CD4-positive, alpha-beta T cell (primary cell): ENCODE measurements at regions of chr19 and their contacts with region 1.

Region 1: GRCh38 chr19:56594783-56595547 is at the start of gene ZNF71:
- DNase-seq: peak; percentile 79 to 90 (median 84)
- ATAC-seq: peak; percentile 95
- H3K4me3 ChIP-seq: peak within 1 kb of the TSS; percentile 73
- H3K4me3 Mint-ChIP-seq: peak within 1 kb of the TSS; percentile 92
- H3K27ac ChIP-seq: peak within 1 kb of the TSS; percentile 43 to 62
- H3K27ac Mint-ChIP-seq: peak within 1 kb of the TSS; percentile 79
- H3K4me1 ChIP-seq: peaks cover 19% of the 10 kb centered on the region
- H3K4me1 Mint-ChIP-seq: peaks cover 24% of the 10 kb centered on the region
- H3K27me3 ChIP-seq: no peaks in the 10 kb centered on the region
- H3K27me3 Mint-ChIP-seq: no peaks in the 10 kb centered on the region
- CTCF ChIP-seq: no peak
- total RNA-seq, gene ZNF71: 2.2 TPM

Region 2: GRCh38 chr19:56403764-56404704 is 190.9 kb before region 1 on chr19 and contains the start of gene ZNF583:
- CTCF ChIA-PET with region 1: no interaction called
- POLR2A ChIA-PET with region 1: interaction called, 4 read pairs
- intact Hi-C with region 1: loop called in 1 of 2 experiments (anchors 5 kb)
- DNase-seq: peak; percentile 79 to 95 (median 88)
- ATAC-seq: peak; percentile 84
- H3K4me3 ChIP-seq: peak within 1 kb of the TSS; percentile 82
- H3K4me3 Mint-ChIP-seq: peak within 1 kb of the TSS; percentile 99
- H3K27ac ChIP-seq: peak within 1 kb of the TSS; percentile 88 to 96
- H3K27ac Mint-ChIP-seq: peak within 1 kb of the TSS; percentile 95
- H3K4me1 ChIP-seq: peaks cover 22% of the 10 kb centered on the region
- H3K4me1 Mint-ChIP-seq: peaks cover 32% of the 10 kb centered on the region
- H3K27me3 ChIP-seq: no peaks in the 10 kb centered on the region
- H3K27me3 Mint-ChIP-seq: no peaks in the 10 kb centered on the region
- CTCF ChIP-seq: no peak
- total RNA-seq, gene ZNF583: 0.95 to 1.5 TPM

Region 3: GRCh38 chr19:56567274-56568120 is 27.5 kb before region 1 on chr19 and contains the start of gene ZNF470:
- CTCF ChIA-PET with region 1: no interaction called
- POLR2A ChIA-PET with region 1: no interaction called
- intact Hi-C with region 1: loop called in 1 of 2 experiments (anchors 1 kb)
- DNase-seq: peak; percentile 75 to 91 (median 84)
- ATAC-seq: peak; percentile 96
- H3K4me3 ChIP-seq: peak within 1 kb of the TSS; percentile 67
- H3K4me3 Mint-ChIP-seq: peak within 1 kb of the TSS; percentile 99
- H3K27ac ChIP-seq: peak within 1 kb of the TSS; percentile 15 to 61
- H3K27ac Mint-ChIP-seq: peak within 1 kb of the TSS; percentile 81
- H3K4me1 ChIP-seq: peaks cover 20% of the 10 kb centered on the region
- H3K4me1 Mint-ChIP-seq: peaks cover 27% of the 10 kb centered on the region
- H3K27me3 ChIP-seq: no peaks in the 10 kb centered on the region
- H3K27me3 Mint-ChIP-seq: no peaks in the 10 kb centered on the region
- CTCF ChIP-seq: no peak
- total RNA-seq, gene ZNF470: 0.56 to 0.85 TPM

Region 4: GRCh38 chr19:56808717-56809392 is 213.9 kb after region 1 on chr19:
- CTCF ChIA-PET with region 1: no interaction called
- POLR2A ChIA-PET with region 1: no interaction called
- intact Hi-C with region 1: no loop called
- DNase-seq: no peak
- ATAC-seq: no peak
- H3K4me3 ChIP-seq: no peak overlapping the region
- H3K4me3 Mint-ChIP-seq: no peak overlapping the region
- H3K27ac ChIP-seq: no peak overlapping the region
- H3K27ac Mint-ChIP-seq: no peak overlapping the region
- H3K4me1 ChIP-seq: no peaks in the 10 kb centered on the region
- H3K4me1 Mint-ChIP-seq: no peaks in the 10 kb centered on the region
- H3K27me3 ChIP-seq: no peaks in the 10 kb centered on the region
- H3K27me3 Mint-ChIP-seq: no peaks in the 10 kb centered on the region
- CTCF ChIP-seq: no peak

Region 5: GRCh38 chr19:57350877-57351805 is 756.2 kb after region 1 on chr19 and contains the start of gene ZNF304:
- CTCF ChIA-PET with region 1: no interaction called
- POLR2A ChIA-PET with region 1: no interaction called
- intact Hi-C with region 1: loop called in 1 of 2 experiments (anchors 10 kb)
- DNase-seq: peak; percentile 63 to 93 (median 76)
- ATAC-seq: peak; percentile 99
- H3K4me3 ChIP-seq: peak within 1 kb of the TSS; percentile 97
- H3K4me3 Mint-ChIP-seq: peak within 1 kb of the TSS; percentile 93
- H3K27ac ChIP-seq: peak within 1 kb of the TSS in 1 of 2 donors; percentile 80
- H3K27ac Mint-ChIP-seq: peak within 1 kb of the TSS; percentile 90
- H3K4me1 ChIP-seq: peaks cover 18% of the 10 kb centered on the region
- H3K4me1 Mint-ChIP-seq: peaks cover 35% of the 10 kb centered on the region
- H3K27me3 ChIP-seq: no peaks in the 10 kb centered on the region
- H3K27me3 Mint-ChIP-seq: peaks cover 9% of the 10 kb centered on the region
- CTCF ChIP-seq: no peak
- total RNA-seq, gene ZNF304: 4.9 to 5.4 TPM